Spleen (tissue), 13 donors: ENCODE measurements at regions of chr1 and their contacts with region 1.

Region 1: GRCh38 chr1:155091071-155091709 is 12.6 kb downstream of the EFNA3 start:
- DNase-seq: peak; percentile 94
- H3K4me3 ChIP-seq: no peak overlapping the region
- H3K27ac ChIP-seq: no peak overlapping the region
- H3K4me1 ChIP-seq: peaks cover 4 to 36% (median 22%) of the 10 kb centered on the region in 6 donors
- H3K27me3 ChIP-seq: peaks cover 0 to 16% (median 0%) of the 10 kb centered on the region in 7 donors
- CTCF ChIP-seq: peak; percentile 94 to 99 (median 98)
- POLR2A ChIP-seq: no peak

Region 2: DNA sequence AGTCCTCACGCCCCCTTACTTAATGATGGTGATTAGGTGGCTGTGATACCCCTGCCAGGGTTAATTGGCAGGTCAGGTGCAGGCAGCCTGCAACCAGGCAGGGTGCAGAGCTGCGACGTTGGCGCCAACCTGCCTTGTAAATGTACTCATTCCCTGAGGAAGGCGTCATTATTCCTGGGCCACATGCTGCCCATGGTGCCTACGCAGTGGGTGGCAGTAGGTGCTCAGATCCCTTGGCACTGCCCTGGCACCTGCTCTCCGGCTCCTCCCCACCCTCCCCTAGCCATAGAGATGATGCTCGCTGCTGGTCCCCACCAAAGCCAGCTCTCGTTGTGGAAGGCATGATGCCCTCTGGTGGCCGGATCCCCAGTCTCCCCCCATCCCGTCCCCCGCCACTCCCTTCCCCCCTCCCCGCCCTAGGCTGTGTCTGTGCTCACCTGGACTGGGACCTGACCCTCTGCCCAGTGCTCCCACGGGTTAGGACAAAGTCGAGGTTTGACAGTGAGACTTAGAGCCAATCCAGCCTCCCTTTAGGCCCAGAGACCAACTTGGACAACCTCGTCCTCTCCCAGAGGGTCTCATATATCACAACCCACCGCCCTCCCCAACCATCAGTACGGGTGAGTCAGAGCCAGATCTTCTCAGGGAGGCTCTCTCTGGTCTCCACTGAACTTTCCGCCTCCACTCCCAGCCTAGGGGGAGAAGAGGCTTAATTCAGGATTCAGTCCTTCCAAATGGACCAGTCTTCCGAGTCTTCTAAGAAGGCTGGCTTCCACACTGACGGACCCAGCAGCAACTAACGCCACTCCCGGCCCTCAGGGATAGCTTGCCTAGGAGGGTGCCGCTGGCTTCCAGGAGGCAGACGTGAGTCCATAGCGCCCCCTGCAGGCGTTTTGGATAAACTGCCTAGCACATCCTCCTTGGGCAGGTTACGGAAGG is 76.2 kb after region 1 on chr1:
- intact Hi-C with region 1: loop called (anchors 2 kb)
- DNase-seq: peak; percentile 96
- H3K4me3 ChIP-seq: peak overlapping the region in 2 of 8 donors; percentile 15 to 51
- H3K27ac ChIP-seq: peak overlapping the region; percentile 11 to 84 (median 70)
- H3K4me1 ChIP-seq: peaks cover 20 to 42% (median 33%) of the 10 kb centered on the region in 6 donors
- H3K27me3 ChIP-seq: no peaks in the 10 kb centered on the region
- CTCF ChIP-seq: peak; percentile 84 to 94 (median 88)
- POLR2A ChIP-seq: no peak

Region 3: DNA sequence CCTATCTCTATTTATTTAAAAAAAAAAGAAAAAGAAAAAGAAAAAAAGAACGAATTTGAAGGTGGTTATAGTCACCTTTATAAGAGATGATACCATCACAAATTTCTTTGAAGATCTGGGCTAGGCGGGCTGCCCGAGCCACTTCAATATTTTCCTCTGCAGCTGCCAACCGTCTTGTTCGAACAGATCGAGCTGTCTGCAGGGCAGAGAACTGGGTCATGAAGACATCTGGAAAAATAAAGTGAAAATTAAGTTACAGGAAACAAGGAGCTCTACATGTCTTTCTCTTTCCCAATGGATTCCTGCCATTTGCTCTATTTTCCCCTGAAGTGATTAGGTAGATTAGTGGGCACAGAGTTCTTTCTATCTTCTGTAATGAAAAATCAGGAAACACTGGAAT is 261.4 kb after region 1 on chr1:
- intact Hi-C with region 1: no loop called
- DNase-seq: no peak
- H3K4me3 ChIP-seq: no peak overlapping the region
- H3K27ac ChIP-seq: no peak overlapping the region
- H3K4me1 ChIP-seq: no peaks in the 10 kb centered on the region
- H3K27me3 ChIP-seq: no peaks in the 10 kb centered on the region
- CTCF ChIP-seq: no peak
- POLR2A ChIP-seq: no peak